ENCODE measurements at regions of chr5 and their contacts with region 1.

Region 1: DNA sequence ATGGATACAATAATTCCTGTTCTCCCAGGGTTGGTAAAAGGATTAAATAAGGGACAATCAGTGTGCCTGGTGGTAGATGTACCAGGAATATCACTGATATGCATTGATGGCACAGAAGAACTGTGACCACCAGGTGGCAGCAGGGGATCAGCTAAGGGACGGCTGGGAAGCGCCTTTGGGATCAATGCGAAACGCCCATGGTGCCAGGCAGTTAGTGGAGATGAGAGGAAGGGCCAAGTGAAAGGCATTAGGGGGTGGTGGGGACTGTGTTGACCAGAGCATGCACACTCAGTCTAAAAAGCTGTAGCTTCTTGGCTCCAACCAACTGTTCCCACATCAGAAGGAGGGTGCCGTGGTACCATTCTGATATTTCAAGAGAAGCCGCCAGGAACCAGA is 55.6 kb downstream of the ARHGEF37 start:
- DNase-seq: no peak
- H3K4me3 ChIP-seq: no peak overlapping the region
- H3K27ac ChIP-seq: no peak overlapping the region
- H3K4me1 ChIP-seq: no peaks in the 10 kb centered on the region
- H3K27me3 ChIP-seq: no peaks in the 10 kb centered on the region
- CTCF ChIP-seq: peak; percentile 55 to 73 (median 72)

Region 2: GRCh38 chr5:149611326-149611725 is 25.5 kb before region 1 on chr5:
- intact Hi-C with region 1: no loop called
- DNase-seq: no peak
- H3K4me3 ChIP-seq: no peak overlapping the region
- H3K27ac ChIP-seq: no peak overlapping the region
- H3K4me1 ChIP-seq: no peaks in the 10 kb centered on the region
- H3K27me3 ChIP-seq: no peaks in the 10 kb centered on the region
- CTCF ChIP-seq: no peak

Region 3: GRCh38 chr5:149828161-149828884 is 191.5 kb after region 1 on chr5:
- intact Hi-C with region 1: loop called (anchors 1 kb)
- DNase-seq: peak in 1 of 2 donors; percentile 93
- H3K4me3 ChIP-seq: no peak overlapping the region
- H3K27ac ChIP-seq: no peak overlapping the region
- H3K4me1 ChIP-seq: no peaks in the 10 kb centered on the region
- H3K27me3 ChIP-seq: no peaks in the 10 kb centered on the region
- CTCF ChIP-seq: peak; percentile 64 to 82 (median 81)